ENCODE measurements at regions of chr9 and their contacts with region 1.

Region 1: DNA sequence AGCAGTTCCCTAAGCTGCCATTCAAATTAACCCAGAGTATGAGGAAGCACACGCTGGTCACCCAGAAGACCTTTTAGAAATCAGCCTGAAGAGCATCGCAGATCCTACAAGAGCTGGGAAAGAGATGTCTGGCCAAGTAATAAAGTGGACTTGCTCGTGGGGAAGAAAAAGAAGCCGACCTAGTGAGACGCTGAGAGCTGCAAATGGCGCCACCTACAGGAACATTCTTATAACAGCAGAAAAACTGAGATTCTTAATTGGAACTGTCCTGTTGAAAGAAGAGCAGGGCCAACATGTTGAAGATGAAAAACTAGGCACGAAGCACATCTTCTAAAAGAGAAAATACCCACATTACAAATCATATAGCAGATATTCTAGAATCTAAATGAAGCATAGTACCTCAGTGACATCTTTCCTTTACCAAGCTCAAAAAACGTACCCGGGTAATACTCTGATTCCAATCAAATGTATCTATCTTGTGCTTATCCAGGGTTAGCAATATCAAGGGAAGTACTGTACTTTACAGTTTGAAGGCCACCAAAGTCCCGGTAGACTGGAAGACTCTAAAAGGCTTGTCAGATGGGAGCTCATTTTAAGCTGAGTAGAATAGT is 3.9 kb upstream of the GNAQ start:
- DNase-seq: peak; percentile 69
- ATAC-seq: peak; percentile 21
- H3K4me3 Mint-ChIP-seq: no peak overlapping the region
- H3K27ac Mint-ChIP-seq: no peak overlapping the region
- H3K4me1 Mint-ChIP-seq: peaks cover 30% of the 10 kb centered on the region
- H3K27me3 Mint-ChIP-seq: no peaks in the 10 kb centered on the region

Region 2: DNA sequence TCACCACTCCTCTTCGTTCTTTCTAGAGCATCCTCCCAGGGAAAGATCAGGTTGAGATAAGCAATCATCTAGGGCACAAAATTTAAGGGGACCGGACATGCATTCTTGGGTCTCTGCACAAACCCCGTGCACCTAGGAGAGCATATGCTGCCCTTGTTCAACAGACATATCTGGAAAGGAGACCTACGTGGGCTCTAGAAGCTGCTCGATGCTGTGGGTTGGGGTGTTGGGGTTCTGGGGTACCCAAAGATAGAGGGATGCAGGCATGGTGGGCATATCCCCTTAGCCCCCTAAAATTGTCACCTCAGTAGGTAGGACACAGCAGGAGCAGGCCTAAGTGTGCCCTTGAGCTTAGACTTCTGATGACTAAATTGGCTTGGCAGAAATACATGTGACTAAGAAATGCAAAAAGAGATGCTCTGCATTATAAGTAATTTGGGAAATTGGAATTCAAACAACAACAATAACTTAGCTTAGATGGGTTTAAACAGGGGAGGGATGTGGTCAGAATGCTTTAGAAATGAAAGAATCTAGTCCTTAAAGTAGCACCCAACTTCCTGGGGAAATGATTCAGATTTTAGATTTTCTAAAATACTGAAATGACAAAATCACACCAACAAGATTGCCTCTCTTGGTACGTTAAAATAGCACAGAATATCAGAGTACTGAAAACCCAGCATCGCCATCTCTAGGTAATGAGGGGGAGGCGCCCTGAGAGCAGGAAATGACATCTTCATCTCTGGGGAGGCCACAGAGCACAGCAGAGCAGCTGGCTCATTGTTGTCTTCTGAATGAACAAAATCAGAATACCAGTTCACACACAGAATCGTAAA is 559.6 kb before region 1 on chr9:
- CTCF ChIA-PET with region 1: no interaction called
- POLR2A ChIA-PET with region 1: no interaction called
- intact Hi-C with region 1: loop called in 1 of 2 experiments (anchors 5 kb)
- DNase-seq: peak; percentile 84
- ATAC-seq: peak; percentile 99
- H3K4me3 Mint-ChIP-seq: peak overlapping the region; percentile 9
- H3K27ac Mint-ChIP-seq: peak overlapping the region; percentile 94
- H3K4me1 Mint-ChIP-seq: peaks cover 31% of the 10 kb centered on the region
- H3K27me3 Mint-ChIP-seq: no peaks in the 10 kb centered on the region

Region 3: DNA sequence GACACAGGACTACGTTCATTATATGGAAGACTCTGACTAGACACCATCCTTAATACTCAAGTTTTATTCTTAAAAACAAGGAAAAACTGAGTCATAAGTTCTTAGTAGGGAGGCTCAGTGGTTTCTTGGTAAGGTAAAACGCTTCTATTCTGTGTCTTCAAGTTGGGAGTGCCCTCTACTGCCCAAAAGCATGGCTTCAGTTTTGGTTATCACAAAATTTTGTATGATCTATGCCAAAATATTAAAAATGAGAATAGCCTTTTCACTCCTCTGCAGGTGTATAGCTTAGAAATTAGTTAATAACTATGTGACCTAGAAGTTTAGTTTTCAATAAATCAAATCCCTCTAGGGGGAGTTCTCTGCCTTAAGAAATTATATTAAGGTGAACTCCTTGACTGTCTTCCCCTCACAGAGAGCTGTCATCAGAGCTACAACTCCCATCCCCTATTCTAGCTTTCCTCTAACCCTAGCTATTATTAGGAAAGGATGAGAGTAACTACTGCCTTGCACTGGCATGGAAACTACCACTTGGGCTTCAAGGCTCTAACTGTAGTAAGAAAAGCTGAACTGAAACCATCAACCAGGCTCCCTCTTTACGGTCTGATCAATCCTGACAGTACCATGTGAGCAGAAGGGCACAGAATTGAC is 193.6 kb before region 1 on chr9:
- CTCF ChIA-PET with region 1: interaction called, 8 read pairs
- POLR2A ChIA-PET with region 1: interaction called, 3 read pairs
- intact Hi-C with region 1: loop called in 1 of 2 experiments (anchors 2 kb)
- DNase-seq: no peak
- ATAC-seq: peak; percentile 57
- H3K4me3 Mint-ChIP-seq: no peak overlapping the region
- H3K27ac Mint-ChIP-seq: no peak overlapping the region
- H3K4me1 Mint-ChIP-seq: peaks cover 11% of the 10 kb centered on the region
- H3K27me3 Mint-ChIP-seq: no peaks in the 10 kb centered on the region

Region 4: DNA sequence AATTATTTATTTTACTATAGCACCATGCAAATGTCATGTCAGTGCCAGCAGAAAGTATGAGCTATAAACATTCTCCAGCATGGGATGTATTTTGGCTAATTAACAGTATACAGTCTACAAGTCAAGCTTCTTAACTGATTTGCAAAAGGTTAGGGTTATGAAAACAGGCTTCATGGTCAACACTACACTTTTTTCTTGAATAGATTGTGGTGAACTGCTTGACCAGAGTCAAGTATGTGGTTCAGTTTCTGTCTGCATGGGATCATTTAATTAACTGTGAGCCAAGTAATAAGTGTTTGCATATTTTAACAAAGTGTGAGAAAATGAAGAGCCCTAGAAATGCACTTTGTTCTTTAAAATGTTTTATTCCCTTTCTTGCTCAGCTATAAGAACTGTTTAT is 10.6 kb after region 1 on chr9:
- CTCF ChIA-PET with region 1: interaction called, 29 read pairs
- POLR2A ChIA-PET with region 1: no interaction called
- intact Hi-C with region 1: no loop called
- DNase-seq: no peak
- ATAC-seq: no peak
- H3K4me3 Mint-ChIP-seq: no peak overlapping the region
- H3K27ac Mint-ChIP-seq: no peak overlapping the region
- H3K4me1 Mint-ChIP-seq: no peaks in the 10 kb centered on the region
- H3K27me3 Mint-ChIP-seq: no peaks in the 10 kb centered on the region

Region 5: DNA sequence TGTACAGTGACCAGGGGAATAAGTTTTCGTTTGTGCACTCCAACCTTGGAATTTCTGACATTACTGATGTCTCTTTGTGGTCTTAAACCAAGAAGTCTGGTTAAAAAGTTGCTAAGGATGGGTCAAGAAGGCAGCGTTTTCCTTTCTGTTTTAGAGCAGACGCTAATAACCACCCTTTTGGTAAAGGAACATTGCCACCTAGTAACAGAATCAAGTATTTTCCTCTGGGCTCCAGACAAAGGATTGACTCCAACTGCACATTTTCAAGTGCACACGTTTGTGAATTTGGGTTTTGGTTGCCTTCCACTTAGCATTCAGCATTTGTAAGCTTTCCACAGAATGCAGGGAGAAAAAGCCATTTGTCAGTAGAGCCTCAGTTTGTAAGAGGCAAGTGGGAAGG is 178.2 kb after region 1 on chr9:
- CTCF ChIA-PET with region 1: no interaction called
- POLR2A ChIA-PET with region 1: no interaction called
- intact Hi-C with region 1: loop called in 1 of 2 experiments (anchors 5 kb)
- DNase-seq: no peak
- ATAC-seq: peak; percentile 55
- H3K4me3 Mint-ChIP-seq: no peak overlapping the region
- H3K27ac Mint-ChIP-seq: no peak overlapping the region
- H3K4me1 Mint-ChIP-seq: peaks cover 37% of the 10 kb centered on the region
- H3K27me3 Mint-ChIP-seq: no peaks in the 10 kb centered on the region

Region 6: GRCh38 chr9:78542491-78543181 is 507.1 kb after region 1 on chr9:
- CTCF ChIA-PET with region 1: no interaction called
- POLR2A ChIA-PET with region 1: no interaction called
- intact Hi-C with region 1: no loop called
- DNase-seq: no peak
- ATAC-seq: no peak
- H3K4me3 Mint-ChIP-seq: no peak overlapping the region
- H3K27ac Mint-ChIP-seq: no peak overlapping the region
- H3K4me1 Mint-ChIP-seq: no peaks in the 10 kb centered on the region
- H3K27me3 Mint-ChIP-seq: peaks cover 1% of the 10 kb centered on the region

Measured in activated CD4-positive, alpha-beta T cell treated with anti-CD3 and anti-CD28 coated beads for 36 hours (primary cell).